ENCODE measurements at regions of chr3 and their contacts with region 1.

Region 1: DNA sequence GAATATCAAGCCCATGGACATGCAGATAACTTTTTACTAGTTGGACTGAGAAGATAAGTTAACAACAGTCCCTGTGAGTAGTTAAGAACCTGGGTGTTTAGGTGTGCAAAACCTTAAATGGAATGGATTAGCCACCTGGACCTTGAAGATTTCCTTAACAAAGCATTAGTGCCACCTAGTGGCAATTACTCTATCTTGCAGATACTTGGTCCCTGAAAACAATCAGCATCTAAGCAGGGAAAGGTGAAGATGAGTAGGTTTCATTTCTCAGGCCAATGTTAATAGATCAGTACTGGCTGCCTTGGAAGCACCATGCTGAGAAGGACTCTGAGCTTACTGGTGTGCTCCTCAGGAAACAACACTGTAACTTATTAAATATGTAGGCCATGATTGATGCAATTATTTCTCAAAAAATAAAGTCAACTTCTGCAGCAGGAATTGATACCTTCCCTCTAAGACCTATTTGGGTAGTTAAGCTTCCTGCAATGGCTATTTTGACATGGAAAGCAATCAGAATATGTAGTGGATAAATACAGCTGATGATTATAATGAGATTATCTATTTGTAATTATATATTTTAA is 329.4 kb downstream of the TBC1D5 start:
- DNase-seq: peak; percentile 63
- H3K4me3 ChIP-seq: no peak overlapping the region
- H3K27ac ChIP-seq: no peak overlapping the region
- H3K4me1 ChIP-seq: no peaks in the 10 kb centered on the region
- H3K27me3 ChIP-seq: no peaks in the 10 kb centered on the region
- CTCF ChIP-seq: peak; percentile 56 to 63
- POLR2A ChIP-seq: no peak

Region 2: GRCh38 chr3:17258823-17259436 is 154.1 kb before region 1 on chr3:
- CTCF ChIA-PET with region 1: interaction called, 21 read pairs
- POLR2A ChIA-PET with region 1: no interaction called
- dilution Hi-C with region 1: no loop called
- intact Hi-C with region 1: loop called (anchors 1 kb)
- DNase-seq: peak; percentile 51
- H3K4me3 ChIP-seq: no peak overlapping the region
- H3K27ac ChIP-seq: no peak overlapping the region
- H3K4me1 ChIP-seq: no peaks in the 10 kb centered on the region
- H3K27me3 ChIP-seq: no peaks in the 10 kb centered on the region
- CTCF ChIP-seq: peak; percentile 55
- POLR2A ChIP-seq: no peak

Region 3: GRCh38 chr3:17302774-17303173 is 110.3 kb before region 1 on chr3:
- CTCF ChIA-PET with region 1: interaction called, 5 read pairs
- POLR2A ChIA-PET with region 1: no interaction called
- dilution Hi-C with region 1: no loop called
- intact Hi-C with region 1: loop called (anchors 2 kb)
- DNase-seq: peak; percentile 43
- H3K4me3 ChIP-seq: no peak overlapping the region
- H3K27ac ChIP-seq: no peak overlapping the region
- H3K4me1 ChIP-seq: peaks cover 2% of the 10 kb centered on the region
- H3K27me3 ChIP-seq: no peaks in the 10 kb centered on the region
- CTCF ChIP-seq: no peak
- POLR2A ChIP-seq: no peak

Region 4: DNA sequence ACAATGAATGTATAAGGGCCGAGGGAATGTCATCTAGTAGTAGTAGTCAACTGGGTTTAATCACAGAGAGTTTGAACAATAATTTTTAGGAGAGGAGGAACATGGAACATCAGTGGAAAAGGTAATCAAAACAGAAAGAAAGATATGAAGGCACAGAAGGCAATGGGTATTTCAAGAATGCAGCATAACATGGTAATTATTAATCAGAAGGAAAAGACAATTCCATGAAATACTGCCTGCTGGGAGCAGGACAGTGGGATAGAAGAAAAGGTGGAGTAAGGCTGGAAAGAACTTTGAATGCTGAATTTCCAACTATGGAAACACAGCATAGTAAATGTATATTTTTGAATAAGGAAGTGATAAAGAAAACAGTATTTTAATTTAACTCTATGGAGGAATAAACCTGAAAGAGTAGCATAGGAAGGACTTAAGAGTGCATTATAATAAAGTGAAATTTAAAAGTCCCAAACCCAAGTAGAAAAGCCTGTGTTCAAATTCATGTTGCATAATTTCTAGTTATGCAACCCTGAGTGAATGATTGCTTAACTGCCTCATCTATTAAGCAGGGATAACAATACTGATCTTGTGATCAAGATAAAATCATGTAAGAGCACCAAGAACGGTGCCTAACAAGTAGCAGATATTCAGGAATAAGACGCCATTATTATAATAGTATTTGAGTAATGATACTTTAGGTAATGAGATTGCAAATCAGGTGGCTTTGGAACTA is 28.3 kb before region 1 on chr3:
- CTCF ChIA-PET with region 1: no interaction called
- POLR2A ChIA-PET with region 1: no interaction called
- dilution Hi-C with region 1: no loop called
- intact Hi-C with region 1: no loop called
- DNase-seq: no peak
- H3K4me3 ChIP-seq: no peak overlapping the region
- H3K27ac ChIP-seq: no peak overlapping the region
- H3K4me1 ChIP-seq: no peaks in the 10 kb centered on the region
- H3K27me3 ChIP-seq: no peaks in the 10 kb centered on the region
- CTCF ChIP-seq: no peak
- POLR2A ChIP-seq: no peak

Region 5: GRCh38 chr3:17423786-17424536 is 10.9 kb after region 1 on chr3:
- CTCF ChIA-PET with region 1: interaction called, 10 read pairs
- POLR2A ChIA-PET with region 1: no interaction called
- dilution Hi-C with region 1: no loop called
- intact Hi-C with region 1: no loop called
- DNase-seq: no peak
- H3K4me3 ChIP-seq: no peak overlapping the region
- H3K27ac ChIP-seq: no peak overlapping the region
- H3K4me1 ChIP-seq: no peaks in the 10 kb centered on the region
- H3K27me3 ChIP-seq: no peaks in the 10 kb centered on the region
- CTCF ChIP-seq: no peak
- POLR2A ChIP-seq: no peak

Measured in endothelial cell of umbilical vein (primary cell).